ENCODE measurements at regions of chr11 and their contacts with region 1.

Region 1: GRCh38 chr11:67656278-67656922 is 5.9 kb upstream of the ACY3 start:
- DNase-seq: peak; percentile 7
- ATAC-seq: no peak
- H3K4me3 ChIP-seq: no peak overlapping the region
- H3K27ac ChIP-seq: no peak overlapping the region
- H3K4me1 ChIP-seq: no peaks in the 10 kb centered on the region
- H3K27me3 ChIP-seq: peaks cover 9% of the 10 kb centered on the region
- CTCF ChIP-seq: no peak
- POLR2A ChIP-seq: no peak
- RAD21 ChIP-seq: no peak

Region 2: DNA sequence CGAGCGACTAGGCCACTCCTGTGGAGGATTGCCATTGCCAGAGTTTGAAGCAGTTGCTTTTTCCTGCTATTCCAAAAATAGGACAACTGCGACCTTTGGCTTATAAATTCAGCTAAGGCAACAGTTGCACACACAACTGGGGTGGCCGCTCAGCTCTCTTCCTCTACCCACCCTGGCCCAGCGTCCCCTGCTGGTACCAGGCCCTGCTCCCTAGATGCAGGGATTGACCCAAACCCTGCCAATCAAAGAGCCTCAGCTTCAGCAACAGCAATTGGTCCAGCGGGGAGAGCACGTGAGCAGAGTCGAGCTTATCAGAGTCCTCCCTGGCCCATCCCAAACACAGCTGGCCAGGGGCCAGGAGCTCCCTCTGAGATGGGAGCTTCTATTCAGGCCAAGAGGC is 111.1 kb before region 1 on chr11:
- CTCF ChIA-PET with region 1: no interaction called
- POLR2A ChIA-PET with region 1: no interaction called
- dilution Hi-C with region 1: no loop called
- in situ Hi-C with region 1: no loop called
- intact Hi-C with region 1: no loop called
- DNase-seq: no peak
- ATAC-seq: no peak
- H3K4me3 ChIP-seq: no peak overlapping the region
- H3K27ac ChIP-seq: no peak overlapping the region
- H3K4me1 ChIP-seq: no peaks in the 10 kb centered on the region
- H3K27me3 ChIP-seq: peaks cover 25% of the 10 kb centered on the region
- CTCF ChIP-seq: no peak
- POLR2A ChIP-seq: no peak
- RAD21 ChIP-seq: no peak

Region 3: GRCh38 chr11:67572747-67573419 is 83.5 kb before region 1 on chr11:
- CTCF ChIA-PET with region 1: no interaction called
- POLR2A ChIA-PET with region 1: no interaction called
- dilution Hi-C with region 1: no loop called
- in situ Hi-C with region 1: no loop called
- intact Hi-C with region 1: loop called (anchors 5 kb)
- DNase-seq: peak; percentile 48
- ATAC-seq: peak; percentile 74; the same call in 1 of the 2 replicates
- H3K4me3 ChIP-seq: no peak overlapping the region
- H3K27ac ChIP-seq: no peak overlapping the region
- H3K4me1 ChIP-seq: no peaks in the 10 kb centered on the region
- H3K27me3 ChIP-seq: peaks cover 32% of the 10 kb centered on the region
- CTCF ChIP-seq: peak; percentile 63
- POLR2A ChIP-seq: no peak
- RAD21 ChIP-seq: peak; percentile 69

Region 4: DNA sequence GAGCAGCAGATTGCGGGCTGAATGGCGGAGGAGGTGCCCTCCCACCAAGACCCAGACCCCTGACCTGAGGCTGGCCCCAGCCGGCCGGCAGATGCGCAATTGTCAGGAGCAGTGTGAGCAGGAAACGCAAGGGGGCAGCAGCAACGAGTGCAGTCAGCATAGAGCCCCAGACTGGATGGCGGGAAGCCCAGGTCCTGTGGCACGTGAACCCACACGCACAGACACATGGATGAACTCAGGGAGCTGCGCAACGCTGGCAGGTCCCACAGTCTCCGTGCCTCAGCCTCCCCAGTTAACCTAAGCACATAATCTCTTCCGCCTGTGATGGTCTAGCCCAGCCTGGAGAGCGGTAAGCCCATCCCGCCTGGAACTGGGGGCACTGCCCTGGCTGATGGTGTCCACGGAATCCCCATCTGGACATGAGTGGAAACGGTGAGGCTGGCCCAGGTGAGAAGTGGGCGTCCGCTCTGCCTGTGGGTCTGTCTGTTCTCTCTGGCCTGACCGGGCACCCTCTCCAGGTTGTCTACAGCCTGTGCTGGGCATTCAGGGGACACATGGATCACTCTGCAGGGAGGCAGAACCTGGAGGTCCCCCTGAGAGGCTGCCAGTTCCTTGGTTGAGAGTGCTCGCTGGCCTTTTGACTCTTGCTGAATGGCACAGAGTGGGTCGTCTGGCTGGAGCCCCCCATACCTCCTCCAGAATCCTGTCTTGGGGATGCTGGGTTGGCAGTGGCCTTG is 16.2 kb before region 1 on chr11:
- CTCF ChIA-PET with region 1: interaction called, 3 read pairs
- POLR2A ChIA-PET with region 1: no interaction called
- dilution Hi-C with region 1: no loop called
- in situ Hi-C with region 1: no loop called
- intact Hi-C with region 1: loop called (anchors 1 kb)
- DNase-seq: peak; percentile 33
- ATAC-seq: peak; percentile 98
- H3K4me3 ChIP-seq: no peak overlapping the region
- H3K27ac ChIP-seq: no peak overlapping the region
- H3K4me1 ChIP-seq: no peaks in the 10 kb centered on the region
- H3K27me3 ChIP-seq: peaks cover 14% of the 10 kb centered on the region; the same call in 1 of the 2 replicates
- CTCF ChIP-seq: peak; percentile 56
- POLR2A ChIP-seq: no peak
- RAD21 ChIP-seq: peak; percentile 53

Measured in IMR-90 (cell line).